ENCODE measurements at regions of chr14 and their contacts with region 1.

Region 1: DNA sequence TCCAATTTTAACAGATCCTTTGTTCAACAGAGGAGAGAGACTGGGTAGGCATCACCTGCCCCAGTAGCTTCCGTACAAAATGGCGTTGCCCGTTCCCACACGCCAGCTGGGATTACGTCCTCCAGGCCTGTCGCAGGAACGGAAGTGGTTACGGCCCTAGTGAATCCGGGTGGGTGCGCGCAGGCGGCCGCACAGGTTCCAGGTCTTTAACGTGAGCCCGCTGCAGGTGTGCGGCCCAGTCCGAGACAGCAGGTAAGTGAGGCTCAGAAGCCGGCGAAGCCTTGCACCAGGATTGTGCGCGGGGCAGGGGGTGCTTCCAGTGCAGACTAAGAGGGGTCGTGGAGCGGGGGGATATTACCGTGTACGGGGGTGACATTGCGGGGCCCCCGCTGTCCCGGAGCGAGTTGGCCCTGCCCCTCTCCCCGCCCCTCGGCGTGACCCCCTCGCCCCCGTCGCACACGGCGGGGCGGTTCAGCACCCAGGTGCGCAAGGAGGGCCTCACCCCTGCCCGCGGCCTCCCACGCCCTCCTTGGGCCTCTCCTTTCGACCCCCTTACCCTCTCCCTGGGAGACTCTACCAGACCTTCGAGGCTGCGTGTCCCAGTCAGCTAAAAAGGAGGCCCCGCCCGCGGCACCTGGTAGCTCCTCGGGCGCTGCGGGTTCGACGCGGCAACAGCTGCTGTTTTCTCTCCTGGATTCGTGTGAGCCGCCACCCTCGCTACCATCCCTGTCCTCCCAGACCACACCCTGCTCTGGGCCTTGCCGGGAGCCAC is at the start of gene EXD2:
- DNase-seq: peak; percentile 58
- ATAC-seq: peak; percentile 84
- H3K4me3 Mint-ChIP-seq: peak within 1 kb of the TSS; percentile 93
- H3K27ac Mint-ChIP-seq: peak within 1 kb of the TSS; percentile 83
- H3K4me1 Mint-ChIP-seq: peaks cover 16% of the 10 kb centered on the region
- H3K27me3 Mint-ChIP-seq: peaks cover 3% of the 10 kb centered on the region
- CTCF ChIP-seq: no peak
- total RNA-seq, gene EXD2: 5.2 and 6.9 TPM in 2 replicates

Region 2: DNA sequence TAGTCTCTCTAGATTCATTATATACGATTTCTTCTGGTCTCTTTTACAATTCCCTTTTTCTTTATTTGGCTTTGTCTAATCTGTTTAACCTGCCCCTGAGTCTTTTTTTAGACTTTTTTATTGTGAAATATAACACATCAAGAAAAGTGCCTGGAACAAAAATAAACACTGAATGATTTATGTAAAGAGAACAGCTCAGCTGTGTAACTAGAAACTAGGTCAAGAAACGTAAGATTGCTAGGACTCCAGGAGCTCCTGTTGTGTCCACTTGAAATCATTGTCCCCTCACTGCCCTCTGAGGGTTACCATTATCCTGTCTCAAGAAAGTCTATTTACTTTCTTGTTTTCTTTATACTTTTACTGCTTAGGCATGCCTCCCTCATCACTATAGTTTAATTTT is 22.9 kb after region 1 on chr14:
- CTCF ChIA-PET with region 1: no interaction called
- POLR2A ChIA-PET with region 1: interaction called, 11 read pairs
- intact Hi-C with region 1: no loop called
- DNase-seq: no peak
- ATAC-seq: no peak
- H3K4me3 Mint-ChIP-seq: no peak overlapping the region
- H3K27ac Mint-ChIP-seq: no peak overlapping the region
- H3K4me1 Mint-ChIP-seq: no peaks in the 10 kb centered on the region
- H3K27me3 Mint-ChIP-seq: no peaks in the 10 kb centered on the region
- CTCF ChIP-seq: no peak

Measured in activated B cell treated with CpG ODN at 0.5 μM for 24 hours (primary cell).